Common myeloid progenitor, CD34-positive (primary cell): ENCODE measurements at regions of chr10 and their contacts with region 1.

Region 1: GRCh38 chr10:122565728-122566206 is 5.2 kb downstream of the DMBT1 start:
- DNase-seq: peak; percentile 63 to 85 (median 76)
- H3K4me3 ChIP-seq: no peak overlapping the region
- H3K27ac ChIP-seq: no peak overlapping the region
- H3K4me1 ChIP-seq: peaks cover 0 to under 1% (median 0%) of the 10 kb centered on the region in 4 experiments
- H3K27me3 ChIP-seq: peaks cover 4 to 53% (median 14%) of the 10 kb centered on the region in 5 experiments

Region 2: DNA sequence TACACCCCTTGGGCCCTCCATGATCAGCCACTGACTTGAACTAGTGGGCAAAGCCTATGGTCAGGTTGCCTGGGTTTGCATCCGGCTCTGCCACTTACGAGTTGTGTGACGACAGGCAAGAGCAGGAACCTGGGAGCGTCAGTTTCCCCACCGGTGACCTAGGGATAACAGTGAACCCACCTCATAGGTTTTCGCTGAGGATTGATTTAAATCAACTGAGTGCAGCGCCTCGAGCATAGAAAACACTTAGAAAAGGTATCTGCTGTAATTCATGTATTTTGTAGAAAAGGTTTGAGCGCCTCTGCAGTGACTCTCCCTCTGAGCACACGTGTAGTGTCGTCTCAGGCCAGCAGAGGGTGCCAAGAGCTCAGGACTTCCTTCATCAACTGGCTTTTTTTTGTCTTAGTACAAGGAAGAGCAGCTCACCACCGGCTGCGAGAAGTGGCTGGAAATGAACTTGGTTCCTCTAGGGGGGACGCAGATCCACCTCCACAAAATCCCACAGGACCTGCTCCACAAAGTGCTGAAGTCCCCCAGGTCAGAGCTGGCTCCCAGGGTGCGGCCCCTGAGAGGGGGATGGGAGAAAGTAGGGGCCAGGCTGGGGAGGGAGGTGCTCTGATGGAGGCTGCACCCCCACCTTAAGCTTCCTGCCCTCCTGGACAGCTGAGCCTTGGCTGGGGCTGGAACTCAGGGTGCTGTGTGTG is 267.0 kb before region 1 on chr10:
- CTCF ChIA-PET with region 1: interaction called, 14 read pairs
- POLR2A ChIA-PET with region 1: no interaction called
- DNase-seq: peak; percentile 61 to 84 (median 79)
- H3K4me3 ChIP-seq: peak overlapping the region in 2 of 7 experiments; percentile 36 to 45
- H3K27ac ChIP-seq: no peak overlapping the region
- H3K4me1 ChIP-seq: peaks cover 0 to 3% (median 0%) of the 10 kb centered on the region in 4 experiments
- H3K27me3 ChIP-seq: peaks cover 0 to 5% (median 0%) of the 10 kb centered on the region in 5 experiments

Region 3: GRCh38 chr10:122450353-122450990 is 115.3 kb before region 1 on chr10:
- CTCF ChIA-PET with region 1: no interaction called
- POLR2A ChIA-PET with region 1: no interaction called
- DNase-seq: no peak
- H3K4me3 ChIP-seq: no peak overlapping the region
- H3K27ac ChIP-seq: no peak overlapping the region
- H3K4me1 ChIP-seq: no peaks in the 10 kb centered on the region
- H3K27me3 ChIP-seq: peaks cover 5 to 26% (median 9%) of the 10 kb centered on the region in 5 experiments

Region 4: GRCh38 chr10:122510326-122510725 is 55.4 kb before region 1 on chr10:
- CTCF ChIA-PET with region 1: interaction called, 16 read pairs
- POLR2A ChIA-PET with region 1: no interaction called
- DNase-seq: no peak
- H3K4me3 ChIP-seq: no peak overlapping the region
- H3K27ac ChIP-seq: no peak overlapping the region
- H3K4me1 ChIP-seq: no peaks in the 10 kb centered on the region
- H3K27me3 ChIP-seq: peaks cover 0 to 6% (median 0%) of the 10 kb centered on the region in 5 experiments

Region 5: DNA sequence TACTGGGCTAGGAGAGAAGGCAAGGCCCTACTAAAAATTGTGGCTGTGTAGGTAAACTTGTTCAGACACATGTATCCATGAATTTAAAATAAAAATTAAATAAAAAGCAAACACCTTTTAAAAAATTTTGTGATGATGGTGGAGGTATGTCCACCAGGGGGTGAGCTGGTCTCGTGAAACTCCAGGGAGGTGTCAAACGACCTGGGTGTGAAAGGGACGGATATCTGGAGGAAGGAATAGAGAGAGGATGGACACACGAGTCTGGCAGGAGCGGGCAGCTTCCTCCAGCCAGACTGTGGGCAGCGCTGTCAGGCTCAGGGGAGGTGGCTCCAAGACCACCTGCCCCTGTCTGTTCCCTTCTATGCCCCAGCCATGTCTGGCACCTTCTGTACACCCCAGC is 40.0 kb before region 1 on chr10:
- CTCF ChIA-PET with region 1: interaction called, 42 read pairs
- POLR2A ChIA-PET with region 1: no interaction called
- DNase-seq: peak; percentile 18 to 51 (median 38)
- H3K4me3 ChIP-seq: no peak overlapping the region
- H3K27ac ChIP-seq: no peak overlapping the region
- H3K4me1 ChIP-seq: no peaks in the 10 kb centered on the region
- H3K27me3 ChIP-seq: peaks cover 0 to 59% (median 11%) of the 10 kb centered on the region in 5 experiments

Region 6: DNA sequence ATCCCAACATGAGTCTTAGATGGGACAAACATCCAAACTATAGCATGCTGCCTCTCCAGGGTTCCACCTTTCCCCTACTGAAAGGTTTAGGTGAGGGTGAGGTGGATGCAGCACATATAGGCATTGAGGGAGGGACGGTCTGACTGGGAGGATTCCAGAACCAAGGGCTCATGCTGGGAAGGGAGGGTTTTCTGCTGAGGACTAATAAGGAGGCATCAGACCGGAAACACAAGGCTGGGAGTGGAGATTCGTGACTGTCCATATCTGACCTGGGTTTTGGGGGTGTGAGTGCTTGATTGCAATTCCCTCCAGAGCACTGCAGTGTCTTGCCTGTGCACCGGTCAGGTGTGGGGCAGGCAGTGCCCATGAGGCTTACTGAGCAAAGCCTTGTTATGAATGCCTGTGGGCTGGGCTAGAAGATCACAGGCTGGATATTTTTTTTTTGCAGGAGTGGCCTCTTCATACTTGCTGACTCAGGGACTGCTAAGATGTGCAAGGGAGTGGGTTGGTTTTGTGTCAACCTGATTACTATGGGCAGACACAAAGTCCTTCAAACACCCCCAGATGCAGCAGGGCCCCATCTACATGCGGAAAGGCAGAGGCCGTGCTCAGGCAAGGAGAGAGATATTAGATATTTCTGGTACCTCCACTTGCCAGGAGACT is 21.5 kb after region 1 on chr10:
- CTCF ChIA-PET with region 1: no interaction called
- POLR2A ChIA-PET with region 1: no interaction called
- DNase-seq: no peak
- H3K4me3 ChIP-seq: no peak overlapping the region
- H3K27ac ChIP-seq: no peak overlapping the region
- H3K4me1 ChIP-seq: no peaks in the 10 kb centered on the region
- H3K27me3 ChIP-seq: peaks cover 0 to 2% (median 0%) of the 10 kb centered on the region in 5 experiments